K562 (cell line): ENCODE measurements at regions of chr2 and their contacts with region 1.

Region 1: DNA sequence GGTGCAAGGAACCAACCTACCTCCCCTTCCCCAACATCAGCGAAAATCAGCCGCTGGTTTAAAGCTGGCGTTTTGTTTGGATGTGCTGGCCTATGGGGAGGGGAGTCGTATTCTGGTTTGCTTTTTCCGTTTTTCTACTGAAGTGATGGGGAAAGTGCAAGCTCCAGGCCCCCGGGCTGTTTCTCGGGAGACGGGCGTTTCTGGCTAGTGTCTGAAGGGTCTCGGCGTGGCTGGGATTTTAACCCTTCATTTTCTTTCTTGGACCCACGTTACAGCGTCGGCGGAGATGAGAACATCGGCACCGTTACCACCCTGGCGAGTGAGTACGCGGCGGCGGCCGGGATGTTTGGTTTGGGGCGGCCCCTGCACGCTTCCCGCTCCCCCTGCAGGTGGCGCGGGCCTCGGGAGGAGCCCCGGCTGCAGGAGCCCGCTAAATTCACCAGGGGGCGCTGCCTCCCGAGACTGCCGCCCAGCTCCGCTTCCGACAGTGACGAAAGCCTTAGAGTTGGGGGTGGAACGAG is 70.7 kb downstream of the PLB1 start:
- DNase-seq: peak; percentile 87 to 97 (median 96)
- ATAC-seq: peak; percentile 99
- H3K4me3 ChIP-seq: peak overlapping the region; percentile 42
- H3K27ac ChIP-seq: no peak overlapping the region
- H3K4me1 ChIP-seq: peaks cover 0 to 7% of the 10 kb centered on the region in 2 experiments; a peak in 3 of 5 replicates
- H3K27me3 ChIP-seq: peaks cover 5 to 14% of the 10 kb centered on the region in 2 experiments; a peak in 4 of 5 replicates
- CTCF ChIP-seq: peak; percentile 93 to 100 (median 100)
- EP300 ChIP-seq: no peak
- POLR2A ChIP-seq: no peak
- RAD21 ChIP-seq: peak; percentile 95 to 96

Region 2: DNA sequence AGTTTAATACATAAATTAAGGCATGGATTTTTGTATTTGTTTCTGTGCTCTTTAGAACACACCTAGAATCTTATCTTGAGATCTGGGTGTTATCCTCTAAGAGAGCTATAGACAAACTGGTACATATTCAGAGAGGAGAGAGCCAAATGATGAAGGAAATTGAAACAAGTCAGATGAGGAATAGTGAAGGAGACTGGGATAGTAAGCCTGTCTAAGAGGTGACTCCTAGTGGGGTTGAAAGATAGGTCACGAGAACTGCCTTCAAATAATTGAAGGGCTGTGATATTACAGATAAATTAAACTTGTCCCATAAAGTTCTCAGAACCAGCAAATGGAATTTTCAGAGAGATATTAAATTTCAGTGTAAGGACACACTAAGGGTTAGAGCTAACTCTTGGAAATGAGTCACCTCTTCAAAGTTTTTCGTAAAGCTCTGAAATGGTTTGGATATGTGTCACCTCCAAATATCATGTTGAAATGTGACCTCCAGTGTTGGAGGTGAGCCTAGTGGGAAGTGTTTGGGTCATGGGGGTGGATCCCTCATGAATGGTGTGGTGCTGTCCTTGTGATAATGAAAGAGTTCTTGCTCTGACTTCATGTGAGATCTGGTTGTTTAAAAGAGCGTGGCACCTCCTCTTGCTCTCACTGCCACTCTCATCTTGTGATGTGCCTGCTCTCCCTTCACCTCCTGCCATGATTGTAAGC is 588.8 kb before region 1 on chr2:
- CTCF ChIA-PET with region 1: no interaction called
- POLR2A ChIA-PET with region 1: no interaction called
- in situ Hi-C with region 1: no loop called
- intact Hi-C with region 1: no loop called
- DNase-seq: peak in 1 of 4 experiments; percentile 32
- ATAC-seq: no peak
- H3K4me3 ChIP-seq: no peak overlapping the region
- H3K27ac ChIP-seq: no peak overlapping the region
- H3K4me1 ChIP-seq: no peaks in the 10 kb centered on the region; a peak in 2 of 5 replicates
- H3K27me3 ChIP-seq: no peaks in the 10 kb centered on the region
- CTCF ChIP-seq: no peak
- EP300 ChIP-seq: no peak
- POLR2A ChIP-seq: no peak
- RAD21 ChIP-seq: peak in 1 of 2 experiments; percentile 26; a peak in 2 of 4 replicates

Region 3: DNA sequence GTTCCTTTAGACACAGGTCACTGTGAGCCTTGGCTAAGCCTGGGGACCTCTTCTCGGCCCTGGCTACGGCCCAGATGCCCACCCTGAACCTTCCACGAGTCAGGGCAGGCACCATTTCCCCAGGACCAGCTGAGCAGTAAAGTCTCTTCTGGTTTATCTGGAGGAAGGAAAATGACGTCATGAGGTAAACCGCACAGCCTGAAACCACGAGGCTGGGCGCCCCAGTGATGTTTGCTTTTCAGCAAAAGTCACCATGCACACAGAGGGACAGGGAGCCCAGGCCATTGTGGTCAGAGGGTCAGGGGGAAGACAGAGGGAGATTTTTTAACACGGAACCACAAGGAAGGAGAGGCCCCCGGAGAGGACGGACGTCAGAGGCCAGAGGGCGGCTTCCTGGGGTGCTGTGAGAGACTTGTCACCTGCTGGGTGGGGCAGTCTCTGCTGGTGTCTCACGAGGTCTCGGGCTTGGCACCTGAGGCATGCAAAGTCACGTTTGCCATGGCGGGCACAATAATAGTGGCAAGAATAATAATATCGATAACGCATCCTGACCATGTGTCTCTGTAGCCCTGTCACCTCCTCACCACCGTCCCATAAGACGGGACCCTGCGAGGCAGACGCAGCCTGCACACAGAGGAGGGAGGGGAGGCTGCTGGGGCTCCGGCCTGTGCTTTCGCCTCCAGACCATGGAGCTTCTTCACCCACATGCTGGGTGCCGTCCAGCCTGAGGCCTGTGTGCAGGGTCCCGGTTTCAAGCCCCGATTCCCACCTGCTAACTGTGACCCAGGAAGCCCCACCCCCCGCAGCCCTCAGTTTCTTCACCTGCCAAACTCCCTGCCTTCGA is 207.1 kb before region 1 on chr2:
- CTCF ChIA-PET with region 1: no interaction called
- POLR2A ChIA-PET with region 1: no interaction called
- in situ Hi-C with region 1: no loop called
- intact Hi-C with region 1: no loop called
- DNase-seq: peak; percentile 39 to 90 (median 62)
- ATAC-seq: peak; percentile 53
- H3K4me3 ChIP-seq: no peak overlapping the region
- H3K27ac ChIP-seq: peak overlapping the region; percentile 74
- H3K4me1 ChIP-seq: peaks cover 64 to 75% of the 10 kb centered on the region in 2 experiments
- H3K27me3 ChIP-seq: no peaks in the 10 kb centered on the region
- CTCF ChIP-seq: peak in 1 of 3 experiments; percentile 2; a peak in 1 of 6 replicates
- EP300 ChIP-seq: peak; percentile 60; the same call in 1 of the 2 replicates
- POLR2A ChIP-seq: no peak
- RAD21 ChIP-seq: peak; percentile 29 to 30; a peak in 3 of 4 replicates

Region 4: GRCh38 chr2:28594289-28595108 is 27.9 kb after region 1 on chr2:
- CTCF ChIA-PET with region 1: interaction called, 13 read pairs
- POLR2A ChIA-PET with region 1: interaction called, 6 read pairs
- in situ Hi-C with region 1: no loop called
- intact Hi-C with region 1: no loop called
- DNase-seq: peak; percentile 82 to 91 (median 84)
- ATAC-seq: peak; percentile 94
- H3K4me3 ChIP-seq: no peak overlapping the region
- H3K27ac ChIP-seq: no peak overlapping the region
- H3K4me1 ChIP-seq: peaks cover 5 to 8% of the 10 kb centered on the region in 2 experiments; a peak in 2 of 5 replicates
- H3K27me3 ChIP-seq: peaks cover 0 to 28% of the 10 kb centered on the region in 2 experiments; a peak in 3 of 5 replicates
- CTCF ChIP-seq: peak; percentile 90 to 95 (median 91)
- EP300 ChIP-seq: no peak
- POLR2A ChIP-seq: no peak
- RAD21 ChIP-seq: peak; percentile 77 to 91

Region 5: GRCh38 chr2:28606986-28607441 is 40.4 kb after region 1 on chr2:
- CTCF ChIA-PET with region 1: interaction called, 29 read pairs
- POLR2A ChIA-PET with region 1: no interaction called
- in situ Hi-C with region 1: no loop called
- intact Hi-C with region 1: loop called (anchors 5 kb)
- DNase-seq: peak in 3 of 4 experiments; percentile 20 to 47 (median 33)
- ATAC-seq: peak; percentile 77
- H3K4me3 ChIP-seq: no peak overlapping the region
- H3K27ac ChIP-seq: no peak overlapping the region
- H3K4me1 ChIP-seq: no peaks in the 10 kb centered on the region
- H3K27me3 ChIP-seq: peaks cover 20 to 82% of the 10 kb centered on the region in 2 experiments; a peak in 4 of 5 replicates
- CTCF ChIP-seq: peak; percentile 44 to 62 (median 60); a peak in 3 of 6 replicates
- EP300 ChIP-seq: no peak
- POLR2A ChIP-seq: no peak
- RAD21 ChIP-seq: peak; percentile 39 to 73

Region 6: DNA sequence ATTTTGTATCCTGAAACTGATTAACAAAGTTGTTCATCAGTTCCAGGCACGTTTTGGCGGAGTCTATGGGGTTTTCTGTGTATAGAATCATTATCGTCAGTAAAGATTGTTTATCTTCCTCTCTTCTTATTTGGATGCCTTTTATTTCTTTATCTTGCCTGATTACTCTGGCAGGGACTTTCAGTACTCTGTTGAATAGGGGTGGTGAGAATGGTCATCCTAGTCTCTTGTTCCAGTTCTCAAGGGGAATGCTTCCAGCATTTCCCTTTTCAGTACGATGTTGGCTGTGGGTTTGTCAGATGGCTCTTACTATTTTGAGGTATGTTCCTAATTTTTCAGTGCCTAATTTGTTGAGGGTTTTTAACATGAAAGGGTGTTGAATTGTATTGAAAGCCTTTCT is 230.0 kb after region 1 on chr2:
- CTCF ChIA-PET with region 1: no interaction called
- POLR2A ChIA-PET with region 1: no interaction called
- in situ Hi-C with region 1: no loop called
- intact Hi-C with region 1: no loop called
- DNase-seq: no peak
- ATAC-seq: no peak
- H3K4me3 ChIP-seq: no peak overlapping the region
- H3K27ac ChIP-seq: no peak overlapping the region
- H3K4me1 ChIP-seq: no peaks in the 10 kb centered on the region
- H3K27me3 ChIP-seq: no peaks in the 10 kb centered on the region
- CTCF ChIP-seq: no peak
- EP300 ChIP-seq: no peak
- POLR2A ChIP-seq: no peak
- RAD21 ChIP-seq: no peak